ENCODE measurements at regions of chr15 and their contacts with region 1.

Region 1: DNA sequence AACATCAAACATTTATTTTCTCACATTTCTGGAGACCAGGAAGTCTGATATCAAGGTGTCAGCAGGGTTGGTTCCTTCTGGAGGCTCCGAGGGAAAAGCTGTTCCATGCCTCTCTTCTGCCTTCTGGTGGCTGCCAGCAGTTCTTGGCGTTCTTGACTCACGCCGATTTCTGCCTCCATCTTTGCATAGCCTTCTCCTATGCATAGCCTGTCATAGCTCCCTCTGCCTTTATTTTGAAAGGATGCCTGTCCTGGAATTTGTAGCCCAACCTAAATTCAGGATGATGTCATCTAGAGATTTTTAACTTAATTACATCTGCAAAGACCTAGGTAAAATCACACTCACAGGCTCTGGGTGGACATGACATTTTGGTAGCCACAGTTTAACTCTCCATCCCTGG is 70.4 kb downstream of the RGMA start:
- DNase-seq: no peak
- CTCF ChIP-seq: no peak

Region 2: GRCh38 chr15:92797168-92797951 is 221.2 kb before region 1 on chr15:
- in situ Hi-C with region 1: loop called (anchors 25 kb)
- DNase-seq: peak; percentile 65
- CTCF ChIP-seq: peak; percentile 62